ENCODE measurements at regions of chr11 and their contacts with region 1.

Region 1: DNA sequence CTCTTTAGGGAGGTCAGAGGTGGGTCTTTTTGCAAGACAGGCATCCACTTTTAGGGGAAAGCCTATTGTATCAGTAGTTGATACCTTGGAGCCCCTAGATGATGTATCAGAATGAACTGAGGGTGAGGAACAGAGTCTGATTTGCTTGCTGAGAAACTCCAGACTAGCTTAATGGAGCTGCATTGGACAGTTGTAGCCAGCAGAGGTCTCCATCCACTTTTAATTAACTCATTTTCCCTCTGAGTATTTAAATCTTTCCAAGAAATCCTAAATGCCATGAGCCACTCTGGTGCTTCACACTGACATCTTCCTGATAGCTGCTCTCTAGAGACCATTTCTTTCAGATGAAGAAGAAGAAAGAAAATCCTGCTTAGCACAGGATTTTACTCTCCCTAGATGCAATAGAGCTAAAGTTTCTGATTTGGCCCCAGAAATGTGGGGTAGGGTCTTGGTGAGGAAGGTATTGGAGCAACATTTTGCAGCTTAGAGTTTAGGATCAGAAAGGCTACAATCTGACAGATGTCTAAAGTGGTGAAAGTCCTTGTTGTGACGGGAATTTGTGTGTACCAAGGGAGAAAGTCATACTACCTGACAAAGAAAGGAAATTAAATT is 38.0 kb downstream of the EXT2 start:
- DNase-seq: no peak
- H3K4me3 ChIP-seq: no peak overlapping the region
- H3K27ac ChIP-seq: no peak overlapping the region
- H3K27me3 ChIP-seq: no peaks in the 10 kb centered on the region
- CTCF ChIP-seq: peak; percentile 81

Region 2: GRCh38 chr11:44110231-44110679 is 23.2 kb before region 1 on chr11:
- CTCF ChIA-PET with region 1: interaction called, 14 read pairs
- POLR2A ChIA-PET with region 1: no interaction called
- DNase-seq: no peak
- H3K4me3 ChIP-seq: no peak overlapping the region
- H3K27ac ChIP-seq: no peak overlapping the region
- H3K27me3 ChIP-seq: no peaks in the 10 kb centered on the region
- CTCF ChIP-seq: peak; percentile 89

Region 3: GRCh38 chr11:44143943-44144909 is 10.8 kb after region 1 on chr11:
- CTCF ChIA-PET with region 1: interaction called, 23 read pairs
- POLR2A ChIA-PET with region 1: no interaction called
- DNase-seq: no peak
- H3K4me3 ChIP-seq: no peak overlapping the region
- H3K27ac ChIP-seq: no peak overlapping the region
- H3K27me3 ChIP-seq: no peaks in the 10 kb centered on the region
- CTCF ChIP-seq: no peak

Region 4: DNA sequence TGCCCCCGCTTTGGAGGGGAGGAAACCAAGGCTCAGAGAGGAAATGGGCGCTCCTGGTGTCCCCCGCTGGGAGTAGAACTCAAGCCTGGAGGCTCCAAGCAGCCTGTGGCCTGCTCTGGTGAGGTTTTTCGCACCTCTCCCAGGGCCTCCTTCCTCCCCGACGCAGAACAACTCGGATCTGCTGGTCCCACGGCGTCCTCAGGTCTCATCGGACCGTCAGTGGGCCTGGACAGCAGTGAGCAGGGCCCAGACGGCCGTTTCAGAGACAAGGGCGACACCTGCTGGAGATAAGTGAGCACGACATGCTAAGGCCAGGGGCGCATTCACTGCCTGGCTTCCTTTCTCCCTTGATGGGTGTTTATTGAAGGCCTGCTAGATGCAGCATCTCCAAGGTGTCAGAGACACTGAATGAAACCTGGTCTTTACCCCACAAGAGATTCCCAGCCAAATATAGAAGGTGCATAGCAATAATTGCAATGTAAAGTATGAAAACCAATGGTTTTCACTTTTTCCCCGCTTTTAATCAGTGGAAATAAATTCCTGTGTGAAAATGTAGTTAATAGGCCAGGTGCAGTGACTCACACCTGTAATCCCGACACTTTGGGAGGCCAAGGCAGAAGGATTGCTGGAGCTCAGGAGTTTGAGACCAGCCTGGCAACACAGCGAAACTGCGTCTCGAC is 405.1 kb after region 1 on chr11:
- CTCF ChIA-PET with region 1: interaction called, 31 read pairs
- POLR2A ChIA-PET with region 1: no interaction called
- DNase-seq: peak; percentile 24
- H3K4me3 ChIP-seq: no peak overlapping the region
- H3K27ac ChIP-seq: no peak overlapping the region
- H3K27me3 ChIP-seq: peaks cover 21% of the 10 kb centered on the region
- CTCF ChIP-seq: peak; percentile 94

Region 5: DNA sequence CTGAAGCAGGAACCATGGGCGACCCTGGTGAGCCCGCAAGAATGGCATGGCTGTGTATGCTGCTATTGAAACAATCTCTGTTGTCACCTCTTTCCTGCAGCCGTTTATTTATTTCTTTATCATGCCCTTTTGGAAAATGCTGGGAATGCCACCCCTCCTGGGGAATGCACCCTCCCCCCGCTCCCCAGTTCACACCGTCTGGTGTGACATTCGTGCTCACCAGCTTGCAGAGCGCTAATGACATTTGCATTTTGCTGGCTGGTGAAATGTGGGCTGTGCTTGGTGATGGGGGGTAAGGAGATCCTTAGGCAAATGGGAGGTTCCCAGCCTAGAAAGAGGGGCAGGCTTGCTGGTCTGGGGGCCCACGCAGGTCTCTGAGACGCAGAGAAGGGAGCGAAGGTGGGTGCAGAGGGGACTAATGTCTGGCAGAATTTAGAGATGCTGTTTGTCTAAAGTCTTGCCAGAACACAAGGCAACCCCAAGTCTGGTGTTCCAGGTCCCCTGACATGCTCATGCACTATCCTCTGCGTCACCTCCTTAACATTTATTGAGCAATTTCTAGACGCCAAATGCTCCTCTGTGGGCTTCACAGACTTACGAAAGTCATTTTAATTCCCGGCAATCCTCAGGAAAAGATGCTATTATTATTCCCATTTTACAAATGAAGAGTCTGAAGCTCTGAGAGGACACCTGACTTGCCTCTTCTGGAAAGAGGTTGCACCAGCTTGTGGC is 725.5 kb after region 1 on chr11:
- CTCF ChIA-PET with region 1: no interaction called
- POLR2A ChIA-PET with region 1: no interaction called
- DNase-seq: no peak
- H3K4me3 ChIP-seq: no peak overlapping the region
- H3K27ac ChIP-seq: no peak overlapping the region
- H3K27me3 ChIP-seq: peaks cover 6% of the 10 kb centered on the region
- CTCF ChIP-seq: no peak